Psoas muscle (tissue), 8 donors: ENCODE measurements at regions of chr17 and their contacts with region 1.

Region 1: DNA sequence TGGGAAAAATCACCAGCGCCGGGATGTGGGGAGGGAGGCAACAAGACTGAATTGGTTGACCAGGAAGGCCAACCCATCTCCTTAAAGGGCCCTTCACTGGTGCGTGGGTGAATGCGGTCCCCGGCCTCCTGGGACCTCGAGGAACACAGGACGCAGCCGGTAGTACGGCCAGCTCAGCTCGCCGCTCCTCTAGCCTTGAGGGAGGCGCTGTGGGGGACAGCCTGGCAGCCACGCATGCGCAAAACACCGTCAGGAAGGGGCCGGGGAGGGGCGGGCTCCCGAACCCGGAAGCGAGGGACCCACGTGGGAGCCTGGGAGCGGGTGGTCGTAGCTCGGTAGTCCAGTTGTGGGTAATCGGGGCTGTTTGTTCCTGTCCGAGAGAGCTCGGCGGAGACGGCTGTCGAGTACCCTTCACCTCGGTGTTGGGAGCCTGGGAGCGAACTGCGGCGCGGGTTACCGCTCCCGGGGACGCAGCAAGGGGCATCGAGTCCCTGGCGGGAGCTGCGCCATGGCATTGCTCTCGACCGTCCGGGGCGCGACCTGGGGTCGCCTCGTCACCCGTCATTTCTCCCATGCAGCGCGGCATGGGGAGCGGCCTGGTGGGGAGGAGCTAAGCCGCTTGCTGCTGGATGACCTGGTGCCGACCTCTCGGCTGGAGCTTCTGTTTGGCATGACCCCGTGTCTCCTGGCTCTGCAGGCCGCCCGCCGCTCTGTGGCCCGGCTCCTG is at the start of gene MRM1:
- DNase-seq: peak; percentile 95 to 98
- ATAC-seq: peak; percentile 95 to 96 (median 95)
- H3K4me3 ChIP-seq: peak within 1 kb of the TSS; percentile 92
- H3K27ac ChIP-seq: peak within 1 kb of the TSS; percentile 93
- H3K4me1 ChIP-seq: peaks cover 14% of the 10 kb centered on the region
- H3K27me3 ChIP-seq: no peaks in the 10 kb centered on the region
- CTCF ChIP-seq: no peak
- total RNA-seq, gene MRM1: 8.7 to 12.1 (median 8.9) TPM

Region 2: GRCh38 chr17:37047631-37048104 is 446.2 kb after region 1 on chr17:
- intact Hi-C with region 1: loop called in 1 of 2 experiments (anchors 2 kb)
- DNase-seq: peak; percentile 75 to 85
- ATAC-seq: peak; percentile 83 to 96 (median 92)
- H3K4me3 ChIP-seq: no peak overlapping the region
- H3K27ac ChIP-seq: no peak overlapping the region
- H3K4me1 ChIP-seq: no peaks in the 10 kb centered on the region
- H3K27me3 ChIP-seq: no peaks in the 10 kb centered on the region
- CTCF ChIP-seq: peak; percentile 86

Region 3: GRCh38 chr17:37373530-37374159 is 772.2 kb after region 1 on chr17:
- intact Hi-C with region 1: loop called in 1 of 2 experiments (anchors 5 kb)
- DNase-seq: no peak
- ATAC-seq: peak; percentile 94 to 98 (median 96)
- H3K4me3 ChIP-seq: no peak overlapping the region
- H3K27ac ChIP-seq: no peak overlapping the region
- H3K4me1 ChIP-seq: no peaks in the 10 kb centered on the region
- H3K27me3 ChIP-seq: no peaks in the 10 kb centered on the region
- CTCF ChIP-seq: peak; percentile 93